ENCODE measurements at regions of chr4 and their contacts with region 1.

Region 1: GRCh38 chr4:75995727-75996126 is 5.0 kb upstream of the SDAD1 start:
- DNase-seq: no peak
- H3K4me3 ChIP-seq: no peak overlapping the region
- CTCF ChIP-seq: peak; percentile 34

Region 2: GRCh38 chr4:75831856-75832405 is 163.8 kb before region 1 on chr4:
- CTCF ChIA-PET with region 1: no interaction called
- POLR2A ChIA-PET with region 1: no interaction called
- DNase-seq: no peak
- H3K4me3 ChIP-seq: no peak overlapping the region
- CTCF ChIP-seq: no peak

Region 3: GRCh38 chr4:76011700-76012387 is 16.1 kb after region 1 on chr4:
- CTCF ChIA-PET with region 1: interaction called, 33 read pairs
- POLR2A ChIA-PET with region 1: no interaction called
- DNase-seq: peak; percentile 23
- H3K4me3 ChIP-seq: no peak overlapping the region
- CTCF ChIP-seq: no peak

Region 4: DNA sequence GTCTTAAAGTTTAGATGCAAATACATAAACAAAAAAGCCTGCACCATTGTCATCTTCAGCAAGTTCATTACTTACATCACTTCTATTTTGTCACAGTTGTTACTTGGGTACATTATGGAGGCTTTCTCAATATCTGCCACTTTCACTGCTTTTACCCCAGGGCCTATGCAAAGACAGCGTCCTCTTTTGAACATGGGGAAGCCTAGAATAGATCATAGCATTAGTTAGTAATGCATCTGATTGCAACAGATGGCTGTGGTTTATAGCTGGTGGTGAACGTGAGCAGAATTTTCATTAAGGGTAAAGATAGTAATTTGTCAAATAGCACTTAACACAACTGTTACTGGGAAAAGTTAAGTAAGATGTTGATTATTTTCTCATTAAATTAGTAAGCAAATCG is 39.4 kb after region 1 on chr4:
- CTCF ChIA-PET with region 1: interaction called, 24 read pairs
- POLR2A ChIA-PET with region 1: no interaction called
- DNase-seq: no peak
- H3K4me3 ChIP-seq: no peak overlapping the region
- CTCF ChIP-seq: no peak

Region 5: GRCh38 chr4:76061982-76062381 is 66.3 kb after region 1 on chr4:
- CTCF ChIA-PET with region 1: interaction called, 153 read pairs
- POLR2A ChIA-PET with region 1: no interaction called
- DNase-seq: no peak
- H3K4me3 ChIP-seq: no peak overlapping the region
- CTCF ChIP-seq: no peak

Region 6: DNA sequence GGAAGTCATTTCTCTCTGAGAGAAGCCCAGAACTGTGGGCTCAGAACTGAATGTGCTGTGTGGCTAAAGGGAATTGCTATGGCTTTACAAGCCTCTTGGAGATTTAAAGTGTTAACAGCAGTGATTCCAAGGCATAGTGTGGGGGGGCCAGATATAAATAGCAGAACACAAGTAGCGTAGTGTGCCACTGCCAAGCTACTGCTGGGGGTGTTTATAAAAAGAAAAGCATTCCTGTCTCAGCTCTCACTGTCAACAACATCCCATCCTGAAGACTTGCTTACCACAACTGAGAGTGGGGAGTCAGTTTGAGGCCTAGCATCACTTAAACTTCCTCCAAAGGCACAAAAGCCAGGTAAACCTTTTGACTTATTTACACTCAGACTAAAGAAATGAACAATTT is 78.7 kb after region 1 on chr4 and contains the start of gene ART3:
- CTCF ChIA-PET with region 1: interaction called, 153 read pairs
- POLR2A ChIA-PET with region 1: no interaction called
- DNase-seq: no peak
- H3K4me3 ChIP-seq: no peak within 1 kb of the TSS
- CTCF ChIP-seq: no peak

Measured in AG04449 (cell line).